ENCODE measurements at regions of chr2 and their contacts with region 1.

Region 1: GRCh38 chr2:190382851-190383250 is 25.3 kb upstream of the MFSD6 start:
- DNase-seq: peak; percentile 32
- H3K4me3 Mint-ChIP-seq: no peak overlapping the region
- H3K27ac Mint-ChIP-seq: no peak overlapping the region
- H3K4me1 Mint-ChIP-seq: peaks cover 9% of the 10 kb centered on the region
- H3K27me3 Mint-ChIP-seq: peaks cover 2% of the 10 kb centered on the region

Region 2: DNA sequence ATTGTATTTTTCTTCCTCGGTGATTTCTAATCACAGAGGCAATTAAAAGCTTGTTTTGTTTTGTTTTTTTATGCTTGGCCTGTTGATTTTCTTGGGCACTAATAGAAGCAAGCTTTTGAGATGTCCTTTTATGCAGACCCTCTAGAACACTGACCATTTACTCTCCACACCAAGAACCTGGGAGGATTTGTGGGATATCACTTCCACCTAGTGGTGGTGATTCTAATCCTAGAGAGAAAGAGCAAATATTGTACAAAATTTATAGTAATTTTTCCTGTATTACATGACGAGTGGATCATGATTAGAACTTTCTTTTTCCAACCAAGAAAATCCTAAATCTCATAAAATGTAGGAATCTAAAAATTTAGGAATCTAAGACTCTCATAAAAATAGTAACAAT is 128.3 kb after region 1 on chr2:
- intact Hi-C with region 1: loop called (anchors 1 kb)
- DNase-seq: no peak
- H3K4me3 Mint-ChIP-seq: no peak overlapping the region
- H3K27ac Mint-ChIP-seq: no peak overlapping the region
- H3K4me1 Mint-ChIP-seq: peaks cover 29% of the 10 kb centered on the region
- H3K27me3 Mint-ChIP-seq: no peaks in the 10 kb centered on the region